AG04449 (cell line): ENCODE measurements at regions of chr19 and their contacts with region 1.

Region 1: DNA sequence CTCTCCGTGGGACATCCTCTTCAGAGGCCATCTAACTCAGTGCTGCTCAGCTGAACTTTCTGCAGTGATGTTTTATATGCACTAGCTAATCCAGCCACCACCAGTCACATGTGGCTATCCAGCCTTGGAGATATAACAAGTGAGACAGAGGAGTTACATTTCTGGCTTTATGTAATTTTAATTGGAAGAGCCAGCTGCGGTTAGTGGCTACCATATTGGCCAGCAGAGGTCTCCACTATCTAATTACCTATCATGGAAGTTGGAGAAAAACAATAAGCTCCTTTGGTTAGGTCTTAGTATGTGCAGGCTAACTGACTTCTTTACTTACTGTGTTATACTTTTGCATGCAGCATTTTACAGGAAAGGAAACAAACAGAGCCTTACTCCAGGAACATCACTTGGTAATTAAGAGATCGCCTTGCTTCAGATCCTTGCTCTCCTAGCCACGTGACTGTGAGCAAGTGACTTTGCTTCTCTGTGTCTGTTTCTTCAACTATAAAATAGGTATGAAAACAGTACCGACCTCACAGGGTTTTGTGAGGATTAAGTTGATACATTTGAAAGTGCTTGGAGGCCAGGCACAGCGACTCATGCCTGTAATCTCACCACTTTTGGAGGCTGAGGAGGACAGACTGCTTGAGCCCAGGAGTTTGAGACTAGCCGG is 1.6 kb upstream of the KLK10 start:
- DNase-seq: peak; percentile 5
- H3K4me3 ChIP-seq: no peak overlapping the region
- CTCF ChIP-seq: peak; percentile 50

Region 2: DNA sequence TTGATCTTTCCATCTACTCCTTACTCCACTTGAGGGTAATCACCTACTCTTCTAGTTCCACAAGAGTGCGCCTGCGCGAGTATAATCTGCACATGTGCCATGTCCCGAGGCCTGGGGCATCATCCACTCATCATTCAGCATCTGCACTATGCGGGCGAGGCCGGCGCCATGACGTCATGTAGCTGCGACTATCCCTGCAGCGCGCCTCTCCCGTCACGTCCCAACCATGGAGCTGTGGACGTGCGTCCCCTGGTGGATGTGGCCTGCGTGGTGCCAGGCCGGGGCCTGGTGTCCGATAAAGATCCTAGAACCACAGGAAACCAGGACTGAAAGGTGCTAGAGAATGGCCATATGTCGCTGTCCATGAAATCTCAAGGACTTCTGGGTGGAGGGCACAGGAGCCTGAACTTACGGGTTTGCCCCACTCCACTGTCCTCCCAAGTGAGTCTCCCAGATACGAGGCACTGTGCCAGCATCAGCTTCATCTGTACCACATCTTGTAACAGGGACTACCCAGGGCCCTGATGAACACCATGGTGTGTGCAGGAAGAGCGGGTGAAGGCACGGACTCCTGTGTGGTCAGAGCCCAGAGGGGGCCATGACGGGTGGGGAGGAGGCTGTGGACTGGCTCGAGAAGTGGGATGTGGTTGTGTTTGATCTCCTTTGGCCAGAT is 150.6 kb before region 1 on chr19:
- CTCF ChIA-PET with region 1: no interaction called
- POLR2A ChIA-PET with region 1: no interaction called
- DNase-seq: no peak
- H3K4me3 ChIP-seq: no peak overlapping the region
- CTCF ChIP-seq: no peak

Region 3: DNA sequence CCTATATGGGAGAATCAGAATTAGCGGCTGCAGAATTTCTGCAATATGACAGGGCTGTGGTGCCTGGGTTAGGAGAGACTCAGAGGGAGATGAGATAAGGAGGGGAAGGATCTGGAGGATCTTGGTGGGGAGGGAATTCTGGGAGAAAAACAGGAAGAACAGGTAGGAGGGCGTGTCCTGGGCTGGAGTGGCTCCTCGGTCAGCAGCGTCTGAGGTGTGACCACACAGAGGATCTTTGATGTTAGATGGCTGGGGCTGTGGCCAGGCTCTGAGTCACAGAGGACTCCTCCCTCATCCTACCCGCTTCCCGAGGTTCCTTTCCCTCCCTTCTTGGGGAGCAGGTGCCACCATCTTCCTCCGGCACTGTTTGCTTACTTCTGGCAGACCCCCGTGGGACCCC is 45.4 kb before region 1 on chr19:
- CTCF ChIA-PET with region 1: no interaction called
- POLR2A ChIA-PET with region 1: no interaction called
- DNase-seq: no peak
- H3K4me3 ChIP-seq: no peak overlapping the region
- CTCF ChIP-seq: no peak

Region 4: GRCh38 chr19:51097166-51097738 is 76.1 kb after region 1 on chr19:
- CTCF ChIA-PET with region 1: interaction called, 61 read pairs
- POLR2A ChIA-PET with region 1: no interaction called
- DNase-seq: no peak
- H3K4me3 ChIP-seq: no peak overlapping the region
- CTCF ChIP-seq: peak; percentile 79

Region 5: GRCh38 chr19:51168564-51169282 is 147.6 kb after region 1 on chr19:
- CTCF ChIA-PET with region 1: interaction called, 13 read pairs
- POLR2A ChIA-PET with region 1: no interaction called
- DNase-seq: no peak
- H3K4me3 ChIP-seq: no peak overlapping the region
- CTCF ChIP-seq: no peak